ENCODE measurements at regions of chr10 and their contacts with region 1.

Region 1: GRCh38 chr10:75021379-75022249 is 89.8 kb upstream of the SAMD8 start:
- DNase-seq: no peak
- H3K4me3 ChIP-seq: no peak overlapping the region
- H3K27ac ChIP-seq: no peak overlapping the region
- H3K4me1 ChIP-seq: no peaks in the 10 kb centered on the region
- H3K27me3 ChIP-seq: no peaks in the 10 kb centered on the region
- CTCF ChIP-seq: no peak

Region 2: DNA sequence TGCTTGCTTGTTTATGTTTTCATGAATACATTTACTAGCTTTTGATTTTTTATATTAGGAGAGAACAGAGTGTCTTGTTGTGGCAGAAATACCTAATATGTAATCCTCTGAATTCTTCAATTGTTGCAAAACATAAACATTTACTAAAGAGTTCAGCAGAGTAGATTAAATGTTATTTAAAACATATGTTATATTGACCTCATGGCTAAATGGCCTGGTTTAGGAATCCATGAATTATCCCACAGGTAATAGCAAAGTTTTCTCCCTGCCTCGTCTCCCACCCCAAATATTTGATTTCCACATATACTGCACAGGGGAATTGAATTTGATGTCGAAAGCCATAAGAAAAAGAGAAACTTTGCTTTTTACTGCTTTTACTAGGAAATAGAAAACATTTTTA is 758.8 kb before region 1 on chr10:
- intact Hi-C with region 1: loop called (anchors 5 kb)
- DNase-seq: no peak
- H3K4me3 ChIP-seq: no peak overlapping the region
- H3K27ac ChIP-seq: no peak overlapping the region
- H3K4me1 ChIP-seq: no peaks in the 10 kb centered on the region
- H3K27me3 ChIP-seq: no peaks in the 10 kb centered on the region
- CTCF ChIP-seq: no peak

Measured in tibial artery (tissue), 4 donors.